ENCODE measurements at regions of chr17 and their contacts with region 1.

Region 1: DNA sequence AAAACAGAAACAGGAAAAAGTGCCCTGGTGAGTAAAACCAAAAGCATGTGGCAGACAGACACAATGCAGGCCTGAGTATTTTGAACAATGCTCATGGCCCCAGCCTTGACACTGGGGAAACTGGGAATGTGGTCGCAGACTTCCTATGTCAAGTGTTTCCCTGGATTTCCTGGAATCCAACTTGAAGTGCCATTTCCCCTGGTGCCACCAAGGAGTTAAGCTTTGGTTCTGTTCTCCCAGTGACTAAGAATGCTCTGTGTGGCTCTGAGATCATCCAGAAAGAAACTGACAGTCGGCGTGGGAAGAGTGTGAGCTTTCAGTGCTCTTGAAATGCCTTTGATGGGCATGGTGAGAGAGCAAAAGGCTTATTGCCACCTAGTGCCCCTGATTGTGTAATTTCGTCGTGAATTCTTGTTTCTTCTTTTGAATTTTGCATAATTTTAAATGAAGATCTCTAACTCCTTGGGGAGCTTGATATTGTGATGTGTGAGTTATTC is 96.0 kb downstream of the YPEL2 start:
- DNase-seq: no peak
- ATAC-seq: peak; percentile 36

Region 2: GRCh38 chr17:59139939-59140338 is 287.5 kb before region 1 on chr17:
- intact Hi-C with region 1: no loop called
- DNase-seq: no peak
- ATAC-seq: no peak

Region 3: GRCh38 chr17:59381716-59382570 is 45.5 kb before region 1 on chr17:
- intact Hi-C with region 1: loop called (anchors 5 kb)
- DNase-seq: peak; percentile 70
- ATAC-seq: peak; percentile 84

Region 4: GRCh38 chr17:59456428-59456827 is 29.0 kb after region 1 on chr17:
- intact Hi-C with region 1: no loop called
- DNase-seq: no peak
- ATAC-seq: no peak

Measured in Right ventricle myocardium superior (tissue), 1 donor.